ENCODE measurements at regions of chr9 and their contacts with region 1.

Region 1: DNA sequence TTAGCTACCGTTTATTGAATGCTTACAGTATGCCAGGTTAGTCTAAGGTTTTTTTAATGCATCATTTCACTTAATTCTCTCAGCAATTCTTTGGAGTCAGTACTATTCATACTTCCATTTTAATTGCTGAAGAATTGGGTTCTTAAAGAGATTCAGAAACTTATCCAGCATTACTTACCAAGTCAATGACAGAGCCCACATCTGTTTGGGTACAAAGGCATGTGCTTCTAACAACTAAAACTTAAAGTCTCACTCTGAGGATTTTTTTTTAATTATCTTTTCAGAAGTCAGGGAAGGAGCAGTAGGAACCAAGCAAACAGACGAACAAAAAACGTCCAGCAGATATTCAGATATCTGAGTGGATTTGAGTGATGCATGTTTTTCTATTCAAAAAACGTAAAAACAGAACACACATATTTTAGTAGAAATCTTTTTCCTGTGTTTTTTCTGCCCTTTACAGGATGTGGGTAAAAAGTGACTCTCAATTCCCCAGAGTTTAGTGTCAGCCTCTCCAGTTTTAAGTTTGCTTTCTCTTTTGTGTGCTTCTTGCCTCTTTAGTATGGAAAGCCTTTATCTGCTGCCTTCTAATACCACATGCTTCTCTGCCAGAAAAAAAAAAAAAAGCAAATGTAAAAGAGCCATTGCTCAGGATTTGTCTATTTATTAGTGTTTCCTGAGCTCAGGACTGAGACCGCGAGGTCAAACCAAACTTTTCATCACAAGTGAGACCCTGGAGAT is 118.0 kb downstream of the PRKACG start:
- DNase-seq: no peak
- ATAC-seq: peak; percentile 93
- H3K4me3 Mint-ChIP-seq: peak overlapping the region; percentile 59
- H3K27ac Mint-ChIP-seq: peak overlapping the region; percentile 92
- H3K4me1 Mint-ChIP-seq: peaks cover 40% of the 10 kb centered on the region
- H3K27me3 Mint-ChIP-seq: no peaks in the 10 kb centered on the region

Region 2: GRCh38 chr9:68923480-68923879 is 27.6 kb after region 1 on chr9:
- CTCF ChIA-PET with region 1: no interaction called
- POLR2A ChIA-PET with region 1: no interaction called
- intact Hi-C with region 1: loop called in 1 of 2 experiments (anchors 2 kb)
- DNase-seq: no peak
- ATAC-seq: no peak
- H3K4me3 Mint-ChIP-seq: no peak overlapping the region
- H3K27ac Mint-ChIP-seq: no peak overlapping the region
- H3K4me1 Mint-ChIP-seq: peaks cover 9% of the 10 kb centered on the region
- H3K27me3 Mint-ChIP-seq: peaks cover 12% of the 10 kb centered on the region

Region 3: DNA sequence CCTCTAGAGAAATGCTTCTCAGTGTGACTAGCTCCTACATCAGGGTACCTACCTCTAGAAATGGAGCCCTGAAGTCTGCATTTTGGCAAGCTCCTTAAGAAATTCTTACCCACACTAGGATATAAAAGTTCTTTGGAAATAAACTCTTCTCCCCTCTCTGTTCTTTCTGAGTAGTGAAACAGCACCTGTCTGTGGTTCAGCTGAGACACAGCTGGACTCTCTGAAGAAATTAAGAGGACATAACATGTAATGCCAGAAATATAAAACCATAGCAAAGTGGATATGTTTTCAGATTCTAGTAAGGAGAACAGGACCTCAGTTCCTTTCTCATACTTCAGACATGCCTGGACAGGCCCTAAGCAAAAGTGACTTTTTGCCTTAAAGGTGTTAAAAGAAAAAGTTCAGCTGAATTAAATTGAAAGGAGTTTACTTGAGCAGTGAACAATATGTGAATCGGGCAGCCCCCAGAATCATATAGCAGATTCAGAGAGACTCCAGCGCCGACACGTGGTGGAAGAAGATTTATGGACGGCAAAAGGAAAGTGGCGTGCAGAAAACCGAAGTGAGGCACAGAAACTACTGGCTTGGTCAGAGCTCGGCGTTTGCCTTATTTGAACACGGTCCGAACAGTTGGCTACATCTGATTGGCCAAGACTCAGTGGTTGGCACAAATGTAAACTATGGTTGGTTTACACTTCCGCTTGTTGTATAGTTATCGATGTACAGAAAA is 53.5 kb after region 1 on chr9:
- CTCF ChIA-PET with region 1: interaction called, 3 read pairs
- POLR2A ChIA-PET with region 1: no interaction called
- intact Hi-C with region 1: loop called in 1 of 2 experiments (anchors 2 kb)
- DNase-seq: peak; percentile 55
- ATAC-seq: no peak
- H3K4me3 Mint-ChIP-seq: no peak overlapping the region
- H3K27ac Mint-ChIP-seq: peak overlapping the region; percentile 48
- H3K4me1 Mint-ChIP-seq: peaks cover 42% of the 10 kb centered on the region
- H3K27me3 Mint-ChIP-seq: peaks cover 13% of the 10 kb centered on the region